Right ventricle myocardium superior (tissue), 1 donor: ENCODE measurements at regions of chr3 and their contacts with region 1.

Region 1: GRCh38 chr3:44529927-44530326 is 25.1 kb upstream of the ZKSCAN7 start:
- DNase-seq: no peak
- ATAC-seq: no peak

Region 2: GRCh38 chr3:44913868-44914468 is 384.0 kb after region 1 on chr3:
- intact Hi-C with region 1: loop called (anchors 2 kb)
- DNase-seq: peak; percentile 76
- ATAC-seq: peak; percentile 78